IMR-90 (cell line): ENCODE measurements at regions of chr19 and their contacts with region 1.

Region 1: GRCh38 chr19:45092747-45093678 is at the start of gene PPP1R37:
- DNase-seq: peak; percentile 97
- ATAC-seq: peak; percentile 81
- H3K4me3 ChIP-seq: peak within 1 kb of the TSS; percentile 62
- H3K27ac ChIP-seq: peak within 1 kb of the TSS; percentile 98
- H3K4me1 ChIP-seq: peaks cover 15% of the 10 kb centered on the region
- H3K27me3 ChIP-seq: no peaks in the 10 kb centered on the region
- CTCF ChIP-seq: peak; percentile 36; the same call in 1 of the 2 replicates
- POLR2A ChIP-seq: 0 out of 2 replicates have a peak, but pooled peaks have one; percentile 51
- RAD21 ChIP-seq: 0 out of 2 replicates have a peak, but pooled peaks have one; percentile 2
- total RNA-seq, gene PPP1R37: 13.1 and 13.9 TPM in 2 replicates

Region 2: GRCh38 chr19:45125926-45126493 is 33.0 kb after region 1 on chr19:
- CTCF ChIA-PET with region 1: interaction called, 4 read pairs
- POLR2A ChIA-PET with region 1: no interaction called
- dilution Hi-C with region 1: no loop called
- in situ Hi-C with region 1: no loop called
- intact Hi-C with region 1: loop called (anchors 5 kb)
- DNase-seq: peak; percentile 49
- ATAC-seq: peak; percentile 94
- H3K4me3 ChIP-seq: no peak overlapping the region
- H3K27ac ChIP-seq: no peak overlapping the region
- H3K4me1 ChIP-seq: no peaks in the 10 kb centered on the region
- H3K27me3 ChIP-seq: no peaks in the 10 kb centered on the region
- CTCF ChIP-seq: peak; percentile 66
- POLR2A ChIP-seq: no peak
- RAD21 ChIP-seq: peak; percentile 74